A673 (cell line): ENCODE measurements at regions of chr3 and their contacts with region 1.

Region 1: DNA sequence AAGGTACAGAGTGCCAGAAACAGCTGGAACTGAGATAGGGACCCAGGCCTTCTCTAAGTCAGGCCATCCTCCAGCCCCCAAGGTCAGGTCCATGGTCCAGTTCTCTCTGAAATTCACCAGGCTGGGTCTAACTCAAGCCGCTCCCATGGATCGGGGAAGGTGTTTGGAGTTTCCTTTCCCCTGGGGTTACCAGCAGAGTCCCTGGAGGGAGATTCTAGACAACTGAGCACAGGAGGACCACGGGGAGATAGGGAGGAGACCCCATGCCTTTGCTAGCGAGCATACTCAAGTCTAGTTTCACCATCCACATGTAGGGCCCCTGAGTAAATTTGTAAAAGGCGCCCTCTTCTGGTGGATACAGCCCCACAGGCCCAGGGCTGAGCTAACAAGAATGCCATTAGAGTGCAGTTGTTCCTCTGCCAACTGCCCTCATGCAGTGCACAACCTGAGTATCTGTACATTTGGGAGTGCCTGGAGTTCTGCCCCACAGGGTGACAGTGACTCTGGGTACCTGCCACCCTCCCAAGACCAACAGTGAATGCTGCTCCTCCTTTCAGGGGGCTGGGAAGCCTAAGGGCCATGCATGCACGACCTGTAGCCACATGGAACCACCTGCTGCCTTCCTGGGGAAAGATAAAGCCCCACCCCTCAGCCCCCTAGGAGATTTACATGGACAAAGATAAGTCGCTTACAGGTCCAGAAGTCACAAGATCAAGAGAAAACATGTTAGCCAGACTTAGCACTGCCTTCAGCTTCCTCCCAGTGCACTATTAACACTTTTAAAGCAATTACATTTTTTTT is 89.0 kb downstream of the IQSEC1 start:
- DNase-seq: peak; percentile 81
- H3K4me3 ChIP-seq: no peak overlapping the region
- H3K27ac ChIP-seq: no peak overlapping the region
- H3K4me1 ChIP-seq: no peaks in the 10 kb centered on the region
- H3K27me3 ChIP-seq: no peaks in the 10 kb centered on the region
- CTCF ChIP-seq: peak; percentile 89

Region 2: GRCh38 chr3:12868039-12869034 is 115.9 kb before region 1 on chr3:
- CTCF ChIA-PET with region 1: interaction called, 3 read pairs
- POLR2A ChIA-PET with region 1: no interaction called
- intact Hi-C with region 1: loop called (anchors 2 kb)
- DNase-seq: peak; percentile 84
- H3K4me3 ChIP-seq: no peak overlapping the region
- H3K27ac ChIP-seq: no peak overlapping the region
- H3K4me1 ChIP-seq: no peaks in the 10 kb centered on the region
- H3K27me3 ChIP-seq: no peaks in the 10 kb centered on the region
- CTCF ChIP-seq: peak; percentile 84

Region 3: DNA sequence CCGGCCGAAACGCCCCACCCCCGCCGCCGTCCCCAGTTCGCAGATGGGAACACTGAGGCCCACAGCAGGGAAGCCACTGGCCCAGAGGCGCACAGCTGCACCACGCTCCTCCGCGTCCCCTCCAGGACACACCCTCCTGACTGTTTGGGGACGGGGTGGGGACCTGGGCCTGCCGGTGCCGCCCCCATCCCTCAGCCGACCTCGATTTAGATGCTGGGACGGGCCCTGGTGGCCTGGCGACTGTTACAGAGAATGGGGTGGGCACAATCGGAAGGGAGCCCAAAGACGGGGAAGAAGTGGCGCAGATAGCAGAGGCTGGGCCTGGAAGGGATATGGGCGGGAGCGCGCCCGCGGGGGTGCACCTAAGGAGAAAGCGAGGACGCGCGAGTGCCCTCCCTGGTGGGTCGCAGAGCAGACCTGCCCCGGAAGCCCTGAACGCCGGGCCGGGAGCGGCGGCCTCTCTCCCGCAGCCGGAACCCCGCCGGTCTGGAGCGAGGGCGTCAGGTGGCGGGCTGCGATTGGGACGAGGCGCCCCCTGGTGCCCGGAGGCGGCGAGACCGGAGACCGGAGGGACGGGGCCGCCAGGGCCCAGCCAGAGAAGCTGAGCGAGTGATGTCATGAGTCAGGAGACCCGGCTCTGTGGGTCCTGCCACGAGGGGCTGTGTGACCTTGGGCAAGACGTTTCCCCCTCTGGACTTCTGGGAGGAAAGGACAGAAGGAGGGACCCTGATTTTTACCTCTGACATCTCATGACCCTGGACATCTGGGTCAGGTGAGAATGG is 10.6 kb after region 1 on chr3:
- CTCF ChIA-PET with region 1: interaction called, 10 read pairs
- POLR2A ChIA-PET with region 1: no interaction called
- intact Hi-C with region 1: no loop called
- DNase-seq: peak; percentile 79
- H3K4me3 ChIP-seq: peak overlapping the region; percentile 61
- H3K27ac ChIP-seq: no peak overlapping the region
- H3K4me1 ChIP-seq: no peaks in the 10 kb centered on the region
- H3K27me3 ChIP-seq: peaks cover 57% of the 10 kb centered on the region
- CTCF ChIP-seq: peak; percentile 95